ENCODE measurements at regions of chr5 and their contacts with region 1.

Region 1: DNA sequence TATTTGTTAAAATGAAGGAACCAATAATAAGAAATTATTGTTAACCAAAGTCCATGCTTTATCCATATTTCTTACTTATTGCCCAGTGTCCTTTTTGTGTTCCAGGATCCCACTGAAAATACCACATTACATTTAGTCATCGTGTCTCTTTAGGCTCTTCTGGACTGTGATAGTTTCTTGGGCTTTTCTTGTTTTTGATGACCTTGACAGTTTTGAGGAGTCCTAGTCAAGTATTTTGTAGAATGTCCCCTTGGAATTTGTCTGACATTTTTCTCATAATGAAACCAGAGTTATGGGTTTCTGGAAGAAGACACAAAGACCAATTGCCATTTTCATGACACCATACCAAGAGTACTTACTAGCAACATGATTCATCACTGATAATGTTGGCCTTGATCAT is 13.6 kb upstream of the COMMD10 start:
- DNase-seq: no peak
- ATAC-seq: no peak

Region 2: GRCh38 chr5:114789773-114790402 is 1281.3 kb before region 1 on chr5:
- intact Hi-C with region 1: no loop called
- DNase-seq: no peak
- ATAC-seq: no peak

Region 3: GRCh38 chr5:115637507-115637906 is 433.7 kb before region 1 on chr5:
- intact Hi-C with region 1: loop called in 1 of 2 experiments (anchors 2 kb)
- DNase-seq: no peak
- ATAC-seq: no peak

Measured in left colon (tissue), 2 donors.